Endothelial cell of umbilical vein (primary cell): ENCODE measurements at regions of chr7 and their contacts with region 1.

Region 1: GRCh38 chr7:90178679-90179278 is 24.5 kb downstream of the STEAP1 start:
- DNase-seq: peak; percentile 85
- H3K4me3 ChIP-seq: peak overlapping the region in 1 of 3 experiments; percentile 5
- H3K27ac ChIP-seq: peak overlapping the region; percentile 93
- H3K4me1 ChIP-seq: peaks cover 36% of the 10 kb centered on the region
- H3K27me3 ChIP-seq: no peaks in the 10 kb centered on the region
- CTCF ChIP-seq: no peak
- POLR2A ChIP-seq: no peak

Region 2: DNA sequence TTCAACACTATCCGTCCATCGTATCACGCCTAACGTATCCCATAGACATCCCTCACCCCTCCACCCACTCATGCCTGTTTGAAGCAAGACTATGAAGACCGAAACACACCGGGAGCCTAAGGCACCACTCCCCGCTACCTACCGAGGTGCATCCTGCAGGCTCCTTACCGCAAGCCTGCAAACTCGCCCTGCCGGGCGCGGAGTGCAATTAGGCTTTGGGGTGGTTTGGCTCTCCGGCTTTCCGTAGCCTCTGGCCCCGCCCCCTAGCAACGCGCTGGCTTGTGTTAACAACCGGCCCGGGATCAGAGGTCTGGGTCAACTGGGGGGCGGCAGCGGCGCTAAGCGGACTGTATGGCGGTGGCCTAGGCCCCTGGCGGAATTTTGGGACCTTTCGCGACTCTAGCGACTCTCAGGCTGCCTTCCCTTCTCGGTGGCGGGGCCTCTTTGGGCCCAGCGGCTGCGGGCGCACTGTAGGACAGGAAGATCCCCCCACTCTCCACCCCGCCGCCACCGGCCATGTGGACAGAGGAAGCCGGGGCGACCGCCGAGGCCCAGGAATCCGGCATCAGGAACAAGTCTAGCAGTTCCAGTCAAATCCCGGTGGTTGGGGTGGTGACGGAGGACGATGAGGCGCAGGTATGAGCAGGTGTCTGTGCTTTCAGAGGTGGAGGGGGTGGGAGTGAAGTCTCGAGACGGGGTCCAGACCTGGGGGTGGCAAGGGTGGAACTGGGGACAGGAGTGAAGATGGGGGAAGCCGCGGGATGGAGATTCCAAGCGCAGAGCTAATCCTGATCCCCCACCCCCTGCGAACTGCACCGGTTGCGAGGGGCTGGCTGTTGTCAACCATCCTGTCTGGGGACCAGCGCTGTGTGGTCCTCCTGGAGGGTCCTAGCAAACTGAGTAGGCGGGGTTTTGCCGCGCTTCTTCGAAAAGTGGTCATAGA is 66.4 kb after region 1 on chr7 and contains the start of gene CFAP69:
- CTCF ChIA-PET with region 1: no interaction called
- POLR2A ChIA-PET with region 1: no interaction called
- dilution Hi-C with region 1: no loop called
- intact Hi-C with region 1: loop called (anchors 2 kb)
- DNase-seq: peak; percentile 86
- H3K4me3 ChIP-seq: peak within 1 kb of the TSS; percentile 45 to 74 (median 57)
- H3K27ac ChIP-seq: peak within 1 kb of the TSS; percentile 13
- H3K4me1 ChIP-seq: peaks cover 9% of the 10 kb centered on the region
- H3K27me3 ChIP-seq: no peaks in the 10 kb centered on the region
- CTCF ChIP-seq: peak; percentile 4 to 49
- POLR2A ChIP-seq: no peak
- total RNA-seq, gene CFAP69: 2.9 and 4.4 TPM in 2 replicates